Ascending aorta (tissue), 2 donors: ENCODE measurements at regions of chr3 and their contacts with region 1.

Region 1: GRCh38 chr3:32947789-32948238 is 3.6 kb upstream of the CCR4 start:
- DNase-seq: peak; percentile 9 to 86
- H3K4me3 ChIP-seq: no peak overlapping the region
- H3K27ac ChIP-seq: no peak overlapping the region
- H3K4me1 ChIP-seq: no peaks in the 10 kb centered on the region
- H3K27me3 ChIP-seq: no peaks in the 10 kb centered on the region
- CTCF ChIP-seq: peak; percentile 63 to 71 (median 70)

Region 2: GRCh38 chr3:33001889-33002288 is 54.1 kb after region 1 on chr3:
- intact Hi-C with region 1: no loop called
- DNase-seq: no peak
- H3K4me3 ChIP-seq: no peak overlapping the region
- H3K27ac ChIP-seq: no peak overlapping the region
- H3K4me1 ChIP-seq: no peaks in the 10 kb centered on the region
- H3K27me3 ChIP-seq: no peaks in the 10 kb centered on the region
- CTCF ChIP-seq: no peak

Region 3: DNA sequence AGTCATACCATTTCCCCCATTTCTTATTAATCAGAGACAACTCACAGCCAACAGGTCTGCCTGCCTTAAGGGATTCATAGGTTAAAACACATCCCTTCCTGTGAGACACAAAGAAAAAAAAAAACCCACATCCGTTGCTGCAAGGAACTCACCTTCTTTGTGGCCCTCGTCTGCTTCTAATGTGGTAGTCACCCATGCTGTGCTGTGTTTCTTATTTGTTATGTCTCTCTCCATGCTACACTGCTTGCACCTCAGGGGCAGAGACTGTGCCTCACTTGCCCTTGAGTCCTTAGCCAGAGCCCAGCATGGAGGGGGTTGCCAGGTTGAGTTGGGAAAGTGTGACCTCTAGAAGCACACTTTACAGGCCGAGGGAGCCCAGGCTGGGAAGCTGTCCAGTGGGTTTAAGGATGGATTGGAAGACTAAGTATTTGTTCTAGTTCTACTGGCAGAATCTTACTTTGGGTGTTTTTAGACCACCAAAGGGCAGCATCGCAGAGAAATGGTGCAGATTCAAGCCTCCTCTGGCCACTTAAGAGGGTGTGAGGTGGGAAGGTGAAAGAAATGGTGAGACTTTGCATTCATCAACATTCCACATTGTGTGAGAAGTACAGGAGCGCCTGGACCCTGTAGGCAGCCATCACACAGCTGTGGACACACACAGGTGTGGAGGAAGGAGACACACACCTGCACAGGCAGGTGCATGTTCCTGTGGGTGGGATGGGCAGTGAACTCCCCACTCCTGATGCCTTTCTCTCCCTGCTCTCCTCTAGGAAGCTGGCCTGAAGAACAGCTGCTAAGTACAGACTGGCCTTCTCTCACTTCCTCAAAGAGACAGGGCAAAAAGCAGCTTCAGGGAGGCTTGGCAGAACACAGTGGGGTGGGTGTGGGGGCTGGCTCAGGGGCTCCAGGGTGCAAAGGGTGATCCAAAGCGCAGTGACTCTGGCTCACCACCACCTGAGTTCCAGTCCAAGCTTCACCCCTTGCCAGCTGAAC is 100.3 kb after region 1 on chr3:
- intact Hi-C with region 1: no loop called
- DNase-seq: no peak
- H3K4me3 ChIP-seq: no peak overlapping the region
- H3K27ac ChIP-seq: no peak overlapping the region
- H3K4me1 ChIP-seq: peaks cover 0 to 3% of the 10 kb centered on the region in 2 donors
- H3K27me3 ChIP-seq: no peaks in the 10 kb centered on the region
- CTCF ChIP-seq: no peak

Region 4: DNA sequence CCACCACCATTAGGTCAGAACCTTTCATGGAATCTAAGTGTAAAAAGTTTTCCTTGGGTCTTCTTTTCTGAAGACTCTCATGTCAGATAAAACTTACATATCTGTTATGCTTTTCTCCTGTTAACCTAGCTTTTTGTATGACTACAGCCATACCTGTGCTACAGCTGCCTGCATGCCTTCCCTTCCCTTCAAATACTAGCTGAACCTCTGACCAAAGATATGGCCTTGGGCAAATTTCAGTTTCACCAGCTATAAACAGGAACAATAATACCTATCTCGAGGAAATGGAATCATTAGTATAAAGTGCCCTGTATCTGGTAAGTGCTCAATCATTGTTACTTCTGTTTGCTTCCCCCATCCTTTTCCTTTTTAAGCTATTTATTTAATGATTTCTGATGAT is 124.1 kb after region 1 on chr3:
- intact Hi-C with region 1: loop called (anchors 2 kb)
- DNase-seq: no peak
- H3K4me3 ChIP-seq: no peak overlapping the region
- H3K27ac ChIP-seq: no peak overlapping the region
- H3K4me1 ChIP-seq: no peaks in the 10 kb centered on the region
- H3K27me3 ChIP-seq: no peaks in the 10 kb centered on the region
- CTCF ChIP-seq: no peak

Region 5: DNA sequence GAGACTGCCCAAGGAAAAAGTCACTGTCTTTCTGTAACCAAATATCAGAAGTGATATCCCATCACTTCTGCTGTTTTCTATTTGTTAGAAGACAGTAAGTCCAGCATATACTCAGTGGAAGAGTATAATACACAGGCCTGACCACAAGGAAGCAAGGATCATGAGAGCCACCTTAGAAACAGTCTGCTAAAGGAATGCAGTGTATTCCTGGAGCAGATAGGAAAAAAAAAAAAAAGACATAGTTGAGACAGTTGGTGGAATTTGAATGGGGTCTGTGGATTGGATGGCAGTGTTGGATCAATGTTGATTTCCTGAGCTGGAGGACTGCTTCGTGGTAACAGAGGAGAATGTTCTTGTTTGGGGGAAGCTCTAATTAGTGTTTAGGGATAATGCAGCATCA is 302.9 kb after region 1 on chr3:
- intact Hi-C with region 1: no loop called
- DNase-seq: no peak
- H3K4me3 ChIP-seq: no peak overlapping the region
- H3K27ac ChIP-seq: no peak overlapping the region
- H3K4me1 ChIP-seq: no peaks in the 10 kb centered on the region
- H3K27me3 ChIP-seq: no peaks in the 10 kb centered on the region
- CTCF ChIP-seq: no peak

Region 6: DNA sequence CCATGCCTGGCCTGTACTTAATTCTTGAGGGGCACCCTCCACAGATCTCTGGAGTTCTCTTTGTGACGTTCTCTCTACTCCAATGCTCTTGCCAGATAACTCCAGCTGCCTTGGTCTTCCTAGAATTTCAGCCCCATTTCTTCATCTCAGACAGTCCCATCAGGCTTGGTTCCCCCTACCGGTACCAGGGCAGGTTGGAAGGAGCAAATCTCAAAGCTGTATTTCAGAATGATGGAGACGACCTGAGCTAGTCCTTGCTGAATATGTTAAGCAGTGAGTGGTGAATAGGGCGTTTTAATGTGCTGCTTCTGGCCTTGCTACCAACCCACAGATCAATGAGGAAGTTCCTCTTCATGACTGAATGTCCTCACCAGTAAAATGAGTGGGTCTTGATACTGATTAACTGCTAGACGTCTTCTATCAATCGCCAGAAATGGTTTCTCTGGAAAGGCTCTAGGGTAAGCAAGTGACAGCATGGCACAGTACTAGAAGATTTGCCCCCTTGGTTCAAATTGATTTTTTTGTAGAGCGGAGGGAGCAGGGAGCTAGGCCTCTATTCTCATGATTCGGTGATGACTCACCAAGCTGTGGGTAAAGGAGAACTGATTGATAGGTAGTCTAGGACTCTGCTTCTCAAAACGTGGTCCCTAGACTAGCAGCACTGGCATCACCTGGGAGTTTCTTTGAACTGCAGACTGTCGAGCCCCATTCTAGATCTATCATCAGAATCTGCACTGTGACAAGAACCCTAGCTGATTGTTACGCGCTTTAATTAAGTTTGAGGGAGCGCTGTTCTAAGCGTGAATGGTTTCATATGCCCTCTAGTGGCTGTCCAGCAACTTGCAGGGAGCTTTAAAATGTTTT is 424.6 kb after region 1 on chr3:
- intact Hi-C with region 1: loop called (anchors 5 kb)
- DNase-seq: no peak
- H3K4me3 ChIP-seq: peak overlapping the region in 1 of 2 donors; percentile 19
- H3K27ac ChIP-seq: peak overlapping the region in 1 of 2 donors; percentile 49
- H3K4me1 ChIP-seq: no peaks in the 10 kb centered on the region
- H3K27me3 ChIP-seq: no peaks in the 10 kb centered on the region
- CTCF ChIP-seq: peak; percentile 86 to 91 (median 90)